ENCODE measurements at regions of chr5 and their contacts with region 1.

Region 1: DNA sequence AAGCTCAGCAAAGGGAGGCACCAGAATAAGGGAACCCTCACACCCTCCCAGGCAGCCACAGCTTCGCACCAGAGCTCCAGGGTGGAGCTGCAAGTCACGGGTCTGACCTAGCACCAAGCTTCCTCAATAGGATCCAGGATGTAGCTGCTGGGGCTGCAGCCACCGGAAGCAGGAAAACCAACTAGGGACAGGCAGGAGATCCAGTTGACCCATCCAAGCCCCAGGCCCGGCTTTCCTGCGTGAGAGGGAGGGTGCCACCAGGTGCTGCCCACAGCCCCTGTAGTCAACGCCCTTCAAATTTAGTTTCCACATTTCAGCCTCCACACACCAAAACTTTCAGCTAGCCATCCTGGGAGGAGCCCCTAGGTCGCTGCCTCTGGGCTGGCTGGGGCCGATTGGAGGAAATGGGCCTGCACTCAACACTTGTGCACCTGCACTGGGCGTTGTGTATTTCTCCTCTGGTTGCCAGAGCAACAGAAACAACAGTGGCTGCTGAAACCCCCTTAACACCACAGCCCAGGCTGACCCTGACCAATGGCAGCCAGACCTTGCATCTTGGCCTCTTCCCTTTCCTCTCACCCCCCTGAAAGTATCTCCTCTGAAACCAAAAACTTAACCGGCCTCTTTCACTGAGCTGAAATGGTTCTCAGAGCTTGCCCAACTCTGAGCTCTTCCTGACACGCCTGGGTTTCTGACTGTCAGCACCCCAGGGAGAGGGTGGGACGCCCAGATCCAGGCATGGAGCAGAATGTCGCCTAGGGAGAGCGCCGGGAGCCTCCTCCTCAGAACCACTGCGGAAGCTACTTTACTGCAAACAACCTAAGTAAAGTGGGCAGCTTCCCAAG is 226.5 kb upstream of the MAP3K1 start:
- DNase-seq: peak; percentile 84

Region 2: GRCh38 chr5:56545016-56545415 is 43.8 kb before region 1 on chr5:
- intact Hi-C with region 1: loop called in 1 of 2 experiments (anchors 1 kb)
- DNase-seq: no peak

Region 3: GRCh38 chr5:56565644-56566043 is 23.2 kb before region 1 on chr5:
- intact Hi-C with region 1: no loop called
- DNase-seq: no peak

Measured in posterior vena cava (tissue), 2 donors.